Dendritic cell treated with granulocyte-macrophage colony-stimulating factor and Interleukin-4, amounts not matched to agents 40 ng/mL and 50 ng/mL, for 4 days (primary cell): ENCODE measurements at regions of chr13 and their contacts with region 1.

Region 1: GRCh38 chr13:31998131-31998530 is 33.4 kb upstream of the FRY start:
- H3K4me3 Mint-ChIP-seq: no peak overlapping the region
- H3K27ac Mint-ChIP-seq: no peak overlapping the region
- H3K4me1 Mint-ChIP-seq: peaks cover 11% of the 10 kb centered on the region
- H3K27me3 Mint-ChIP-seq: no peaks in the 10 kb centered on the region

Region 2: DNA sequence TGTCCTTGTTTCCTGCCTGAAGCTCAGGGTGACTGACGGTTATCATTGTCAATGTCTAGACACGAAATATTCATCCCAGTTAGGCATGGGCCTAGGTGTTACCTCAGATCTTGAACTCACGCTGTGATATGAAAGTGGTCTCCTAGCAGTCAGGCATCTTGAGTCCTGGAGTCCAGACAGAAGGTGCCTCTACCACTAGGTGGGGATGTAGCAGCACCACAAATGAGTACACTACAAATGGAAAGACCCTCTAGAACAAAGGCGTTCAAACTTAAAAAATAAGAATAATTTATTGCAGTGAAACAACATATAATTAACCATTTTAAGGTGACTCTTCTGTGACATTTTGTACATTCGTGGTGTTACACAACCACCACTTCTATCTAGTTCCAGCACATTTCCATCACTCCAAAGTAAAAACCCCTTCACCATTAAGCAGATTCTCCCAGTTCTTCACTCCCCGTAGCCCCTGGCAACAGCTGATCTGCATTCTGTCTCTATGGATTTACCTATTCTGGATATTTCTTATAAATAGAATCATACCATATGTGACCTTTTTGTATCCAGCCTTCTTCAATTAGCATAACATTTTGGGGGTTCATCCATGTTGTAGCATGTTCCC is 21.6 kb after region 1 on chr13:
- intact Hi-C with region 1: loop called (anchors 1 kb)
- H3K4me3 Mint-ChIP-seq: no peak overlapping the region
- H3K27ac Mint-ChIP-seq: no peak overlapping the region
- H3K4me1 Mint-ChIP-seq: peaks cover 5% of the 10 kb centered on the region
- H3K27me3 Mint-ChIP-seq: no peaks in the 10 kb centered on the region